Dendritic cell treated with granulocyte-macrophage colony-stimulating factor and Interleukin-4, amounts not matched to agents 40 ng/mL and 50 ng/mL, for 4 days (primary cell): ENCODE measurements at regions of chr20 and their contacts with region 1.

Region 1: DNA sequence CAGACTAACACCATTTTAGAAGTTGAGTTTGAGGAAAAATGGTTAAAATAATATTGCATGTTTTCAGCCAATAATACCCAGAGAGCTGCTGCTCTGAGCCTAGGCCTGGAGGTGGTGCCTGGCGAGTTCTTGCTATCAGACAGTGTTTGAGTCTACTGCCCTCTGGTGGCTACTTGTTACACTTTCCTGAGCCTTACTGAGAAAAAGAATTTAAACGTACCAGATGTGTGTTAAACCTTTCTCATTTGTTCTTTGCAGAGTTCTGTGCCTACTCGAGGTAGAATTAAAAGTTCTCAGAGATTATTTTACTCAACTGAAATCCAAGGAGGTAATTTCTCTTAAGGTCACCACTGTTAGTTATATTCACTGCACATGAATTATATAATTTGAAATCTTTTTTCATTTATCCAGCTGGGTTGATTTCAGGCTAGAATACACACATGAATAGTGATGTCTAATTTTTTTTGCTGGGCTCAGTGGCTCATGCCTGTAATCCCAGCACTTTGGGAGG is 38.2 kb downstream of the SHLD1 start:
- H3K4me3 Mint-ChIP-seq: no peak overlapping the region
- H3K27ac Mint-ChIP-seq: no peak overlapping the region
- H3K4me1 Mint-ChIP-seq: peaks cover 9% of the 10 kb centered on the region
- H3K27me3 Mint-ChIP-seq: no peaks in the 10 kb centered on the region

Region 2: DNA sequence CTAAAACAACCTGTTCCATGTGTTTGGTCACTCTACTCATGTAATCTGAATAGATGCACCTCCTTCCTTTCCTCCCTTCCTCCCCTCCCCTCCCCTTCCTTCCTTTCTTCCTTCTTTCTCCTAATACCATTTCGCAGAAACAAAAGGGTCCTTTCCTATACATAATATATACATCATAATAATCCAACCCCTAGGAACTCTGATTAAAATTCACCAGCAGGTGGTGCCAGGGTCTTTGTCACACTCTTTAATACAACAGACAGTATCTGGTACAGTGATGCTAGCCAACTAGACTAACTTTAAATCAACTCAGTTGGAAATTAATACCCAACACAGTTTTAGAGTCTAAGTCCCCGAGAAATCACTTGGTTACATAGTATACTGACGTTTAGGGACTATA is 219.4 kb before region 1 on chr20:
- intact Hi-C with region 1: loop called (anchors 1 kb)
- H3K4me3 Mint-ChIP-seq: no peak overlapping the region
- H3K27ac Mint-ChIP-seq: peak overlapping the region; percentile 83
- H3K4me1 Mint-ChIP-seq: peaks cover 25% of the 10 kb centered on the region
- H3K27me3 Mint-ChIP-seq: no peaks in the 10 kb centered on the region

Region 3: GRCh38 chr20:5844063-5844681 is 55.7 kb after region 1 on chr20:
- intact Hi-C with region 1: no loop called
- H3K4me3 Mint-ChIP-seq: no peak overlapping the region
- H3K27ac Mint-ChIP-seq: no peak overlapping the region
- H3K4me1 Mint-ChIP-seq: no peaks in the 10 kb centered on the region
- H3K27me3 Mint-ChIP-seq: no peaks in the 10 kb centered on the region

Region 4: DNA sequence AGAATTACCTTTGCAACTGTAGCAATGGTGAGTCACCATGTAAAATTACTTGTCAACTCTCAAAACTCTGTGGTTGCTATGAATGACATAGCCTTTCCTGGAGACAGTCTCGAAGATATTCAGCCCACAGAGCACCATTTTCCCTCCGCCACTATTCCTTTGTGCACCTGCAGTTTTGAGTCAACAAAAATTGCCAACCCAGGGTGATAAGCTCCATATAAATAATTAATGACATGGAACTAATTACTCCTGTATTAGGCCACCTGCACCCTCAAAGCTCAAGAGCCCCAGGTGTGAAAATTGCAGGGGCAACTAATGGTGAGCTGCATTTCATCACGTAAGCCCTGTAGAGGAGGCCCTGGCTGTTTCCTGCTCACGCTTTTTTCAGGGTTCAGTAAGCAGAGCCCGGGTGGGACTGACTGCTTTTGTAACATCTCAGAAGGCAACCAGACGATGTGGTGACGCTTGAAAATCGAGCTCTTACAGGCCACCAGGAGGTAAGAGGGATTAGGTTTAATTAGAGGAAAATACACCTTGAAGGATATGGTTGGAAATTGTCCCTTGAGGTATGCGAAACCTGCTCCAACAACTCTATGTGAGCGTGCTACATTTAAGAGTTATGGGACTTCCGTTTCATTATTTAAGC is 1049.9 kb after region 1 on chr20:
- intact Hi-C with region 1: no loop called
- H3K4me3 Mint-ChIP-seq: no peak overlapping the region
- H3K27ac Mint-ChIP-seq: no peak overlapping the region
- H3K4me1 Mint-ChIP-seq: no peaks in the 10 kb centered on the region
- H3K27me3 Mint-ChIP-seq: peaks cover 5% of the 10 kb centered on the region